ENCODE measurements at regions of chr5 and their contacts with region 1.

Region 1: GRCh38 chr5:157148734-157149615 is 6.3 kb upstream of the MED7 start:
- DNase-seq: no peak
- H3K4me3 ChIP-seq: no peak overlapping the region
- CTCF ChIP-seq: peak; percentile 76

Region 2: GRCh38 chr5:157159209-157159751 is 10.3 kb after region 1 on chr5:
- CTCF ChIA-PET with region 1: interaction called, 22 read pairs
- POLR2A ChIA-PET with region 1: no interaction called
- DNase-seq: no peak
- H3K4me3 ChIP-seq: no peak overlapping the region
- CTCF ChIP-seq: no peak

Region 3: DNA sequence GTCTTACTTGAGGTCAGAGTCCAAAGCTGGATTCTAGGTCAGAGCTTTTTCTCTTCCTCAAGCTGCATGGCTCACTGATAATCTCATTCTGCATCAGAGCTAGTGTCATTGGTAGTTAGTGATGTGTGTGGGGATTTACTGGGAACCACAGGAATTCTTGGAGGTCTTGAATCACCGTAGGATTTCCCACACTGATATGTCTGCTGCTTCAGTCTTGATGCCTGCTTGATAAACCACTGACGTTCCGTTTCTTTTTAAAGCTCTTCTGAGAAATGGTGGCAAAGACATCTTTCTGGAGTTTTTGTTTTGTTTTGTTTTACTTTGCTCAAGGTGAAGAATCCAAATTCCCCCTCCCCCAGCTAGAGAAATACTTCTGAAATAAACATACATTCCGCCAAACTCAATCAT is 18.2 kb after region 1 on chr5:
- CTCF ChIA-PET with region 1: interaction called, 20 read pairs
- POLR2A ChIA-PET with region 1: no interaction called
- DNase-seq: peak; percentile 80
- H3K4me3 ChIP-seq: no peak overlapping the region
- CTCF ChIP-seq: no peak

Region 4: DNA sequence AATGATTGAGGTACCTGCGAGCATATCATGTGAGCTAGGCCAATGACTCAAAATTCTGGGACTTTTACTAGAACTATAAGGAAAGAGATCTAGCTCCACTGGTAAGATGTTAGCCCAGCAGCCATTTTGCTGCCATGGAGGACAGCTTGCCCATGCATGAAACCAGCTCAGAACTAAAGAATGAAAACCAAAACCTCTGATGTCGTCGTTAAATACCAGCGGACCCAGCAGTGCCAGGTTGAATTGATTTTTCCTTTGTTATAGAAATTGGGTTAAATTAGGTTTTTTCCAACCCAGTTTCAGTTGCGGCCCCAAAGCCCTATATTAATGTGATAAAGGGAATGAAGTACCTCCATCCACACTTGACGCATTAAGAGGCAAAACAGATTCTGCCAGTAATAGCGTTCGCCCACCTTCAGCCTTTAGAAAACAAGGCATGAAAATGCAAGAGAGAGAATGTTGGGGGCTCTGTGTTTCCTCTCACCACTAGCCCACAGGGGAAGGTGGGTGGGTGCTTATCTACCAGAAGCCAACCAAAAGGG is 26.2 kb after region 1 on chr5:
- CTCF ChIA-PET with region 1: interaction called, 11 read pairs
- POLR2A ChIA-PET with region 1: no interaction called
- DNase-seq: no peak
- H3K4me3 ChIP-seq: no peak overlapping the region
- CTCF ChIP-seq: no peak

Region 5: GRCh38 chr5:157312492-157312891 is 163.5 kb after region 1 on chr5:
- CTCF ChIA-PET with region 1: interaction called, 47 read pairs
- POLR2A ChIA-PET with region 1: no interaction called
- DNase-seq: no peak
- H3K4me3 ChIP-seq: no peak overlapping the region
- CTCF ChIP-seq: peak; percentile 81